Pancreas (tissue), 10 donors: ENCODE measurements at regions of chr5 and their contacts with region 1.

Region 1: DNA sequence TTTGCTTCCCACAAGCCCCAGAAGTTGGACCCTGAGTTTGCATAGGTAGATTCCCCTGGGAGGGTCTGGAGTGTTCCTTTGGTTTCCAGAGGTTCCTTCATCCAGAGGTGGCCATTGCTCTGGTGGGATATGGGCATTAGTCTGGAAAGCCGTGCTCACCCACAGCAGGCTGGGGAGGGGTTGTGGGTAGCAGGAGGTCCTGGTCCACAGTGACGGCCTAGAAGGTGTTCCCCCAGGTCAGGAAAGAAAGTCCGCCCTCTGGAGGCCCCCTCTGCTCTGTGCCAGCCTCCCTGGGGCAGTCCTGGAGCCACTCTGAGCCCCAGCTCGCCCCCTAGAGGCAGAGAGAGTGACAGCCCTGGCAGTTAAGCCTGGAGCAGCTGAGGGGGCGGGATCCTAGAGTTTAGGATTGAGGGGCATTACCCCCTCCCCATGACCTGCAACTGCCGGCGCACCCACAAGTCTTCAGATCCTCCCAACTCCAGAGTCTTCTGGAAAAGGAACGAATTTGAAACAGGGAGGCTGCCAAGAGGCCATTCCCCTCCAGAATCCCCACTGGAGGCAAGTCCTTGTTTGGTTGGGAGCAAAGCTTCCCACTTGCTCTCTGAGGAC is 36.8 kb downstream of the NDST1 start:
- DNase-seq: peak; percentile 68 to 88 (median 82)
- ATAC-seq: peak; percentile 81 to 95 (median 90)
- H3K4me3 ChIP-seq: no peak overlapping the region
- H3K27ac ChIP-seq: no peak overlapping the region
- H3K4me1 ChIP-seq: no peaks in the 10 kb centered on the region
- H3K27me3 ChIP-seq: no peaks in the 10 kb centered on the region
- CTCF ChIP-seq: peak; percentile 64 to 86 (median 82)

Region 2: DNA sequence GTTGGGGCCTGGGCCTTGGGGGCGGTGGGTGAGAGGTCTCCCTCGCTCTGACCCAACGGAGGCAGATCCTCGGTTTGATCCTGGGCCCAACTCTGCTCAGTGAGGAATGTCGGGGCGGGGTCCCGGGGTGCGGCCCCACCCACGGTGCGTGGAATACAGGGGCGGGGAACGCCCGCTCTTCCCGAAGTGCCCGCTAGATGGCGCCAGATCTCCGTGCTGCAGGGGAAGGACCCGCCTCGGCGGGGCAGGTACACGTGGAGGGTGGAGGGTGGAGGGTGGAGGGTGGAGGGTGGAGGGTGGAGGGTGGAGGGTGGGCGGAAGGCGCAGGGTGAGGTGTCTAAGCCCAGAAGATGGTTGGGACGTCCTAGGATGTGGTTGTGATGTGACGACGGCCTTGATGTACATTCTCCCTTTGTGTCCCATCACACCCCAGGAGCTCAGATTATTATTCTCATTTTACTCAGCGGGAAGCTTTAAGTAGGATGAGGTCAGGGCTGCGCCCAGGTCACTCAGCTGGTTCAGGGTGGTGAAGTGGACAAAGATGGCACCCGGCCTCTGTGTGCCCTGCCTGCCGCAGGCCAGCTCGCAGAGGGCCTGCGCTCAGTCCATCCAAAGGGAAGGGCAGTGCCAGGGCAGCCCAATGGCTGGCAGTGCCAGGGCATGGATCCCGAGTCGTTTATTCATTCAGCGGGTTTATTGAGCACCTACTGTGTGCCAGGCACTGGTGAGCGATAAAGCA is 85.7 kb before region 1 on chr5:
- intact Hi-C with region 1: loop called in 2 of 3 experiments (anchors 5 kb)
- DNase-seq: peak; percentile 61 to 95 (median 86)
- ATAC-seq: peak; percentile 97 to 99 (median 98)
- H3K4me3 ChIP-seq: peak overlapping the region in 1 of 4 donors; percentile 27
- H3K27ac ChIP-seq: no peak overlapping the region
- H3K4me1 ChIP-seq: no peaks in the 10 kb centered on the region
- H3K27me3 ChIP-seq: no peaks in the 10 kb centered on the region
- CTCF ChIP-seq: peak; percentile 69 to 85 (median 72)

Region 3: DNA sequence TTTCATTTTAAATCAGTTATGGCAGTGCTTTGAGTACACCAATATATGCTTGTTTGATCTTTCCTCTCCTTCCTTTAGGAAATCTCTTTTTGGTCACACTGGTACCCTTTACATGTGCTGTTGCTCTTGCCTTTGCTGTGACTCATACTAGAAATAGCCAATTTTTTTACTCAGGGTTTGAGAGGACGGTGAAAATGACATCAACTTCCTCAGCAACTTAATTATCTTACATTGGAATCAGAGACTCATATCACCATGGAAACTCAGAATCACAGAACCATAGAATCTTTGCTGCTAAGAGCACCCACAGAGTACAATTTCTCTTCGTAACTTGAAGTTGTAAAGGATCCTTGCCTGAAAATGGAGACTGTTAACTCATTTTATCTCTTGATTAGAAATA is 373.9 kb after region 1 on chr5:
- intact Hi-C with region 1: no loop called
- DNase-seq: no peak
- ATAC-seq: no peak
- H3K4me3 ChIP-seq: no peak overlapping the region
- H3K27ac ChIP-seq: no peak overlapping the region
- H3K4me1 ChIP-seq: no peaks in the 10 kb centered on the region
- H3K27me3 ChIP-seq: no peaks in the 10 kb centered on the region
- CTCF ChIP-seq: no peak